Psoas muscle (tissue), 8 donors: ENCODE measurements at regions of chr16 and their contacts with region 1.

Region 1: DNA sequence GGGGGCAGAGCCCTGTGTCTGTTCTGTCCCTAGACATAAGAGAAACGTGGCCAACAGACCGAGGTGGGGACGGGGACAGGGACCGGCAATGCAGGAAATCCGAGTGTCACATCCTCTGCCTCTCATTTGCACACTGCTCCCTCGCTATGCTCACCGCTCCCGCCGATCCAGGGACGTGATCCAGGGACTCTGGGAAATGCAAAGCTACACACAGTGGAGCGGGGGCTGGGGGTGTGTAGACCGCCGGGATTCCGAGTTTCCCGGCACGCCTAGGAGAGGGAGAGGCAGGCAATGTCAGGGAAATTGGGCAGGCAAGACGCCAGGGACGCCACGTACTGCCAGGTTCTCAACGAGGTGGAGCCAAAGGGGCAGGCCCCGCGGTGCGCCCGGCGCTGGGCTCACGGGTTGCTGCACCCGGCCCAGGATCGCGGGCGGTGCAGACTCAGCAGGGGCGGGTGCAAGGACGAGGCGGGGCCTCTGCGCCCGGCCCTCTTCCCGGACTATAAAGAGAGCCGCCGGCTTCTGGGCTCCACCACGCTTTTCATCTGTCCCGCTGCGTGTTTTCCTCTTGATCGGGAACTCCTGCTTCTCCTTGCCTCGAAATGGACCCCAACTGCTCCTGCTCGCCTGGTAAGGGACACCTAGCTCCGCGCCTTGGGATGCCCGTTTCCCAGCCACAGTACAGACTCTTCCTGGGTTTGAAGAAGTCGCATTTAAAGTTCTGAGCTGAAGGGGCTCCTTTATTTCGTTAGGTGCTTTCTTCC is at the start of gene MT1X:
- DNase-seq: peak; percentile 97 to 99
- ATAC-seq: peak; percentile 61 to 81 (median 72)
- H3K4me3 ChIP-seq: peak within 1 kb of the TSS; percentile 88
- H3K27ac ChIP-seq: peak within 1 kb of the TSS; percentile 92
- H3K4me1 ChIP-seq: peaks cover 45% of the 10 kb centered on the region
- H3K27me3 ChIP-seq: no peaks in the 10 kb centered on the region
- CTCF ChIP-seq: no peak
- total RNA-seq, gene MT1X: 481 to 5,859 (median 2,812) TPM

Region 2: GRCh38 chr16:56608043-56608875 is 73.9 kb before region 1 on chr16 and contains the start of gene MT2A:
- intact Hi-C with region 1: loop called in 1 of 2 experiments (anchors 2 kb)
- DNase-seq: peak; percentile 97
- ATAC-seq: peak; percentile 48 to 66 (median 58)
- H3K4me3 ChIP-seq: peak within 1 kb of the TSS; percentile 89
- H3K27ac ChIP-seq: peak within 1 kb of the TSS; percentile 99
- H3K4me1 ChIP-seq: peaks cover 65% of the 10 kb centered on the region
- H3K27me3 ChIP-seq: no peaks in the 10 kb centered on the region
- CTCF ChIP-seq: no peak
- total RNA-seq, gene MT2A: 342 to 5,614 (median 2,291) TPM

Region 3: DNA sequence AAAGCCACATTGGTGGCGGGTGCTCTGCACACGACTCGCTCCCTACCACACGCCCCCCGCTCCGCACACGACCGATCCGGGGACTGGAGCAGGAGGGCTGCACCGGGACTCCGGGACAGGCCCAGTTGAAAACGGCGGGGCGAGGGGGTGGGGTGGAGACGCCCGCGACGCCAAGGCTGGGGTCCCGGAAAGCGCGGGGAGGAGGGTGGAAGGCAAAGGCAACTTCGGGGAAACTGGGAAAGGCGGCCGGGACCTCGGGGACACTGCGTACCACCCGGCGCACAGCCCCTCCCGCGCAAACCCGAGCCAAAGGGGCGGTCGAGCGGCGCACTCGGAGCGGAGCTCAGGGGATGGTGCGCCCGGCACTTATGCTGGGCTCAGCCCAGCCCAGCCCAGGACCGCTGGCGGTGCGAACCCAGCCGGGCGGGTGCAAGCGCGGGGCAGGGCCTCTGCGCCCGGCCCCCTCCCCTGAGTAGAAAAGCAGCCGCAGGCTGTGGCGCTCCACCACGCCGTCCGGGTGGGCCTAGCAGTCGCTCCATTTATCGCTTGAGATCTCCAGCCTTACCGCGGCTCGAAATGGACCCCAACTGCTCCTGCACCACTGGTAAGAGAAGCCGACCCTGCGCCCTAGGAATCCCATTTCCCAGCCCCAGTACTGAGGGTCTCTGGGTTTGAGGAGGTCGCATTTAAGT is 49.8 kb before region 1 on chr16 and contains the start of gene MT1M:
- intact Hi-C with region 1: loop called in 1 of 2 experiments (anchors 2 kb)
- DNase-seq: peak; percentile 82 to 85
- ATAC-seq: peak; percentile 59 to 71 (median 65)
- H3K4me3 ChIP-seq: peak within 1 kb of the TSS; percentile 67
- H3K27ac ChIP-seq: peak within 1 kb of the TSS; percentile 34
- H3K4me1 ChIP-seq: peaks cover 12% of the 10 kb centered on the region
- H3K27me3 ChIP-seq: peaks cover 0 to 2% (median 0%) of the 10 kb centered on the region in 3 donors
- CTCF ChIP-seq: no peak
- total RNA-seq, gene MT1M: 1.4 to 288 (median 12.8) TPM